Posterior vena cava (tissue), 2 donors: ENCODE measurements at regions of chr11 and their contacts with region 1.

Region 1: DNA sequence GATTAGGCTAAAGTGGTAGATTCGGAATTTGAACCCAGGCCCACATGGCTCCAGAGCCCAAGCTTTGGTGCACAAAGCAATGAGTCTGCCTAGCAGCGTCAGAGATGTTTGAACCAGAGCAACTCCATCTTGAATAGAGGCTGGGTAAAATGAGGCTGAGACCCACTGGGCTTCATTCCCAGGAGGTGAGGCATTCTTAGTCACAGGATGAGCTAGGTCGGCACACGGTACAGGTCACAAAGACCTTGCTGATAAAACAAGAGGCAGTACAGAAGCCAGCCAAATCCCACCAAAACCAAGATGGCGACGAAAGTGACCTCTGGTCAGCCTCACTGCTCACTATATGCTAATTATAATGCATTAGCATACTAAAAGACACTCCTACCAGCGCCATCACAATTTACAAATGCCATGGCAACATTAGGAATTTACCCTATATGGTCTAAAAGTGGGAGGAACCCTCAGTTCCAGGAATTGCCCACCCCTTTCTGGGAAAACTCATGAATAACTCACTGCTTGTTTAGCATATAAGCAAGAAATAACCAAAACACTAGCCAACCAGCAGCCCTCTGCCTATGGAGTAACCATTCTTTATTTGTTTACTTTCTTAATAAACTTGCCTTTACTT is 40.3 kb upstream of the DAGLA start:
- DNase-seq: no peak

Region 2: GRCh38 chr11:61477727-61478148 is 162.2 kb before region 1 on chr11:
- intact Hi-C with region 1: loop called (anchors 10 kb)
- DNase-seq: peak; percentile 89

Region 3: DNA sequence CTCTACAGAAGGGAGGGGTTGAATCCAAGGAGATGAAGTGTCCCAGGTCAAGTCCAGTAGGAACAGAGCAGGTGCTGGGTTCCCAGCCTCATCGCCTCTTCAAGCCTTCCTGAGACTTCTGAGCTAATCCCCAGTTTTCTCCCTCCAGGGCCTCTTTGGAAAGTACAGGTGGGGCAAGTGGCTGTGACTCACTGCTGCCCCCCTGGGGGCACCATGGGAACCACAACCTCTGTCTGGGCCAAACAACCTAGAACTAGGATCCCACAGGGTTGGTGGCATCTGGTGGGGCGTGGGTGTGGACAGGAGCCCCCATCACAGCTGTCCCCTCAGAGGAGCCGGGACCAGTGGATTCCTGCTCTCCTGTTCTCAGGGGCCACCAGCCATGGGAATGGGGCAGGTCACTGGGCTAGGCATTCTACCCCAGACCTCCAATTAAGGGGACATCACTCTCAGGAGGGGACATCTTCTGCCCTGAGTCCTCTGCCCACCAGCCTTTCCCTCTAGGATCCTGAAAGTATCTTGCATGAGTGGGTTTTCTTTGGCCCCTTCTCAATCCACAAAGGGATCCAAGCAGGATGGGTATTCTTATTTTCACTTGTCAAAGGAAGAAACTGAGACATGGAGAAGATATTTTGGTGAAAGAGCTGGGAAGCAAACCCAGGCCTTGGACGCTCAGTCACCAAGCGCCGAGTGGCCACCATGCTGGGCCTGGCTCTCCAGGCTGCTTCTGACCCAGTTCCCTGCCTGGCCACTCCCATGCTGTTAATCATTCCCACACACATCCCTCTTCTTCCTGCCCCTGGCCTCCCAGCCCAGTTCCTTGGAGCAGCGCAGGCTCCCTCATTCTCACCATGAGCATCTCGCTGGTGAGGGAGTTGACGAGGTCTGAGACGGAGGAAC is 107.5 kb before region 1 on chr11:
- intact Hi-C with region 1: loop called in 1 of 2 experiments (anchors 10 kb)
- DNase-seq: no peak

Region 4: GRCh38 chr11:61577732-61578425 is 62.1 kb before region 1 on chr11:
- intact Hi-C with region 1: no loop called
- DNase-seq: no peak

Region 5: GRCh38 chr11:61711498-61711897 is 71.6 kb after region 1 on chr11:
- intact Hi-C with region 1: no loop called
- DNase-seq: no peak

Region 6: DNA sequence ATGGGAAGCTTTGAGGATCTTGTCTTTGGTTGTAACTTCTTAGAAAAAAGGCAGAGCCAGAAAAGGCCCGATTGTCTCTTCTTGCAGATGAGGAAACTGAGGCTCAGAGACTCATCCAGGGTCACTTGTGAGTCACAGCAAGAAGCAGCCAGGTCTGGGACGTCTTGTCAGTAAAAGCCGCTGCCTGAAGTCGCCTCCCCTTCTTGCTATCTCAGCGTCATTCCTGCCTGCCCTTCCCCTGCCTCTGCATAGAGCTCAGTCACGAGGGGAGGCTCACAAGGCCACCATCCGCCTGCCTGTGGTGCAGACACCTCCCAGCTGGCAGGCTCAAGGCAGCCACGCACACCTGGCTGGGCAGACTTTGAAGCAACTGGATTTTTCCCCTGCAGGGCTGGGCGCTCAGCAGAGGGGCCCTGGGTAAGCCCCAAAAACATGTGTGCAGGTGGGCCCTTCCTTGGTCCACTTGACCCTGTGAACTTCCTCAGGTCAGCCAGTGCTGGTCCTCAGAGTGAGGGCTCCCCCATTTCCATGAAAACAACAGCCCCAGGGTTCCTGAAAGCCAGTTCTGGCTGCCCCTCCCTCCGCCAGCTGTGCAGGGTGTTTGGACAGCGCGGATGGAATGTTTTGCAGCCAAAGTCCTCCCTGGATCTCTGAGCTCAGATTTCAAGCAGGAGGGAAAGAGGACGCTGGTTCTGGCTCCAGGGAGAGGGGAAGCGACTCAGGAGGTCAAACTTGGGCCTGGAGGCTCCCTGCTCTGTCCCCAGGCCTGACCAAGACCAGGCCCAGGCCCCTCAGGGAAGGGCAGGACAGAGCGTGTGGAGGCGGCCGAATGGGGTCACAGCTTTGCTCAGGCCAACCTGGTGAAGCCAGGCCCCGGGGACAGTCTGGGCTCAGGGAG is 283.5 kb after region 1 on chr11:
- intact Hi-C with region 1: no loop called
- DNase-seq: peak; percentile 94